Activated B cell treated with CpG ODN at 0.5 μM for 24 hours (primary cell): ENCODE measurements at regions of chr17 and their contacts with region 1.

Region 1: GRCh38 chr17:81860756-81861518 is 602 bp upstream of the P4HB start:
- DNase-seq: peak; percentile 100
- ATAC-seq: peak; percentile 90
- H3K4me3 Mint-ChIP-seq: peak overlapping the region; percentile 89
- H3K27ac Mint-ChIP-seq: peak overlapping the region; percentile 94
- H3K4me1 Mint-ChIP-seq: peaks cover 30% of the 10 kb centered on the region
- H3K27me3 Mint-ChIP-seq: no peaks in the 10 kb centered on the region
- CTCF ChIP-seq: no peak

Region 2: DNA sequence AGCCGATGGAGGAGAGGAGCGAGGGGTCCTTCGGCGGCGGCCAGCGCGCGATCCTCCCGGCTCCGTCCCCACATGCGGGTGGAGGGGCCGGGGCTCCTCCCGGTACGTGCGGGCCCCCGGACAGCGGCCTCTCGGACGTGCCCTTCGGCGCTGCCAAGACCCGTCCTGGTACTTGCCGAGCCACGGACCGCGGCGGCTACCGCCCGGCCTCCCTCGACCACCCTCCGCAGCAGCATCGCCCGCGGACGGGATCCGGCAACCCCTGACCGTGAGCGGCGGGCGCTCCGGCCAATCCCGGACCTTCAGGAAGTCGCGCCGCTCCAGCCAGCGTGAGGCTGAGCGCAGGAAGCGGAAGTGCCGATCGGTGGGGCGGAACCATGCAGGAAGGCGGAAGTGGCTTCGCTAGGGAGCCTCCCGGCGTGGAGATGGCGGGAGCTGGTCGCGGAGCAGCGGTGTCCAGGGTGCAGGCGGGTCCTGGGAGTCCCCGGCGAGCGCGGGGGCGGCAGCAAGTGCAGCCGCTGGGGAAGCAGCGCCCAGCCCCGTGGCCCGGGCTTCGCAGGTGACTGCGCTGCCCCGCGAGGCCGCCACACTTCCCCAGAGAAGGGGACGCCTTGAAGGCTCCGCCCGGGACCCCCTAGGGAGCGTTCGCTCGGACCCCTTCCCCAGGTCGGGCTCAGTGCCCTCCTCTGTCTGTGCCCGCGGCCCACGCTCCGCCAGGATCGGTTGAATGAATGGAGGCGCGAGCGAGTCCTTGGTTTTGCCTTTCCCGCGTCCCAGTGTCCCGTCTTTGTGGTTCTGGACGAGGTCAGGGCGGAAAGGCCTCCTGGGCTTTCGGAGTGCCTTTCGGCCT is 194.4 kb before region 1 on chr17 and contains the starts of genes CCDC137 and OXLD1:
- CTCF ChIA-PET with region 1: no interaction called
- POLR2A ChIA-PET with region 1: no interaction called
- intact Hi-C with region 1: loop called (anchors 2 kb)
- DNase-seq: peak; percentile 91
- ATAC-seq: peak; percentile 98
- H3K4me3 Mint-ChIP-seq: peak within 1 kb of the TSS; percentile 91
- H3K27ac Mint-ChIP-seq: peak within 1 kb of the TSS; percentile 83
- H3K4me1 Mint-ChIP-seq: peaks cover 28% of the 10 kb centered on the region
- H3K27me3 Mint-ChIP-seq: no peaks in the 10 kb centered on the region
- CTCF ChIP-seq: no peak
- total RNA-seq, gene CCDC137: 34.7 and 41.3 TPM in 2 replicates
- total RNA-seq, gene OXLD1: 36.7 and 37.3 TPM in 2 replicates

Region 3: GRCh38 chr17:81711814-81712467 is 149.0 kb before region 1 on chr17 and contains the start of gene SLC25A10:
- CTCF ChIA-PET with region 1: no interaction called
- POLR2A ChIA-PET with region 1: interaction called, 9 read pairs
- intact Hi-C with region 1: loop called (anchors 1 kb)
- DNase-seq: peak; percentile 82
- ATAC-seq: peak; percentile 89
- H3K4me3 Mint-ChIP-seq: peak within 1 kb of the TSS; percentile 84
- H3K27ac Mint-ChIP-seq: peak within 1 kb of the TSS; percentile 19
- H3K4me1 Mint-ChIP-seq: peaks cover 17% of the 10 kb centered on the region
- H3K27me3 Mint-ChIP-seq: no peaks in the 10 kb centered on the region
- CTCF ChIP-seq: no peak
- total RNA-seq, gene SLC25A10: 6.1 and 6.4 TPM in 2 replicates

Region 4: DNA sequence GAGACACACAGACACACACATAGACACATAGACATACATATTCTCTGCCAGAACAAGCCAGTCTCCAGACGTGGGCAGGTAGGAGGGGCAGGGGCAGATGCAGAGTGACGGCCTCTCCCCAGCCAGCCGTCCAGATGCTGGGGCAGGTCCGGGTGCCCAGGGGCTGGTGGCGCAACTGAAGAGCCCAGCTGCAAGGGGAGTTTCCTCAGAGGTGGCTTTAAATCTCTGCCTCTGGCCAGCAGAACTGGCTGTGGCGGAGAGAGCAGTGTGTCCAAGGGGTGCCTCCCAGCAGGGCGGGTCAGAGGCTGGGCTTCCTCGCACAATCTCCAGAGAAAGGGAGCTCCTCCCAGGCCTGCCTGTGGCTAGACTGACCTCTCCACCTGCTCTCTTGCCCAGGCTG is 66.4 kb before region 1 on chr17:
- CTCF ChIA-PET with region 1: no interaction called
- POLR2A ChIA-PET with region 1: no interaction called
- intact Hi-C with region 1: no loop called
- DNase-seq: no peak
- ATAC-seq: no peak
- H3K4me3 Mint-ChIP-seq: no peak overlapping the region
- H3K27ac Mint-ChIP-seq: no peak overlapping the region
- H3K4me1 Mint-ChIP-seq: no peaks in the 10 kb centered on the region
- H3K27me3 Mint-ChIP-seq: no peaks in the 10 kb centered on the region
- CTCF ChIP-seq: no peak

Region 5: GRCh38 chr17:81871387-81872230 is 10.7 kb after region 1 on chr17:
- CTCF ChIA-PET with region 1: no interaction called
- POLR2A ChIA-PET with region 1: interaction called, 77 read pairs
- intact Hi-C with region 1: loop called (anchors 1 kb)
- DNase-seq: peak; percentile 96
- ATAC-seq: peak; percentile 18
- H3K4me3 Mint-ChIP-seq: peak overlapping the region; percentile 87
- H3K27ac Mint-ChIP-seq: peak overlapping the region; percentile 93
- H3K4me1 Mint-ChIP-seq: peaks cover 39% of the 10 kb centered on the region
- H3K27me3 Mint-ChIP-seq: no peaks in the 10 kb centered on the region
- CTCF ChIP-seq: no peak

Region 6: GRCh38 chr17:81927653-81928543 is 67.0 kb after region 1 on chr17 and contains the start of gene MAFG:
- CTCF ChIA-PET with region 1: no interaction called
- POLR2A ChIA-PET with region 1: interaction called, 8 read pairs
- intact Hi-C with region 1: loop called (anchors 2 kb)
- DNase-seq: peak; percentile 93
- ATAC-seq: peak; percentile 60
- H3K4me3 Mint-ChIP-seq: peak within 1 kb of the TSS; percentile 88
- H3K27ac Mint-ChIP-seq: peak within 1 kb of the TSS; percentile 85
- H3K4me1 Mint-ChIP-seq: peaks cover 33% of the 10 kb centered on the region
- H3K27me3 Mint-ChIP-seq: peaks cover 7% of the 10 kb centered on the region
- CTCF ChIP-seq: no peak
- total RNA-seq, gene MAFG: 27.9 and 30.7 TPM in 2 replicates

Region 7: DNA sequence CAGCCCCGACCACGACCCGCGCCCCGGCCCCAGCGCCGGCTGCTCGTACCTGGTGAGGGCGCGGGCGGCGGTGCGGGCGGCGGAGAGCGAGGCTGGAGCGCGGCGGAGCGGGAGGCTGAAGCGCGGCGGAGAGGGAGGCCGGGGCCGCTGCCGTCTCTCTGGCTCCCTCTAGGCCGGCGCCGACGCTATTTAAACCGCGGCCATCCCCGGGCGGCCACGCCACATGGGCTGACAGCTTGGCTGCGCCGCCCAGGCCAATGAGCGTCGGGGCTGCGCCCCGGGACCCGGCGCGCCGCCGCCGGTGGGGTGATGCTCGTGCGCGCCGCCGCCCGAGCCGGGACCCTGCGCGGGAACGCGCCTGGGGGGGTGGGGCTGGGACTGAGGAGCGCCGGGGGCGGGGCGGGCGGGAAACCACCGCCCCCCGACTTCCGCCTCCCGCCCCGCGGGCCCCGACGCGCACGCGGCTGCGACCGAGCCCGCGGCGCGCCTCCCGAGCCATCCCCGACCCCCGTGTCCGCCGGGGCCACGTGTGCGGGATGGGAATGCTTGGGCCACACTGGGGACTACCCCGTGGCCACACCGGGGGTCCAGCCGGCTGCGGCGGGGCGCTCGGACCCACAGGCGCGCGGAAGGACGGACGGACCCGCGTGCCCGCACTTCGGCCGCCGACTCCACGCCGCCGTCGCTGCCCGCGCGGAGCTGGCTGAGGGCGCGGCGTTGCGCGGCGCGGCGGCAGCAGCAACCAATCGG is 237.3 kb after region 1 on chr17 and contains the start of gene FASN:
- CTCF ChIA-PET with region 1: no interaction called
- POLR2A ChIA-PET with region 1: interaction called, 8 read pairs
- intact Hi-C with region 1: loop called (anchors 1 kb)
- DNase-seq: peak; percentile 90
- ATAC-seq: peak; percentile 78
- H3K4me3 Mint-ChIP-seq: peak within 1 kb of the TSS; percentile 73
- H3K27ac Mint-ChIP-seq: no peak within 1 kb of the TSS
- H3K4me1 Mint-ChIP-seq: peaks cover 16% of the 10 kb centered on the region
- H3K27me3 Mint-ChIP-seq: no peaks in the 10 kb centered on the region
- CTCF ChIP-seq: no peak
- total RNA-seq, gene FASN: 104 and 121 TPM in 2 replicates